Upper lobe of right lung (tissue), 1 donor: ENCODE measurements at regions of chr17 and their contacts with region 1.

Region 1: GRCh38 chr17:7136266-7136877 is 21.8 kb upstream of the ASGR2 start:
- DNase-seq: peak; percentile 89
- ATAC-seq: peak; percentile 62
- H3K4me3 ChIP-seq: no peak overlapping the region
- H3K27ac ChIP-seq: no peak overlapping the region
- H3K4me1 ChIP-seq: peaks cover 3% of the 10 kb centered on the region
- H3K27me3 ChIP-seq: peaks cover 5% of the 10 kb centered on the region
- CTCF ChIP-seq: peak; percentile 96

Region 2: DNA sequence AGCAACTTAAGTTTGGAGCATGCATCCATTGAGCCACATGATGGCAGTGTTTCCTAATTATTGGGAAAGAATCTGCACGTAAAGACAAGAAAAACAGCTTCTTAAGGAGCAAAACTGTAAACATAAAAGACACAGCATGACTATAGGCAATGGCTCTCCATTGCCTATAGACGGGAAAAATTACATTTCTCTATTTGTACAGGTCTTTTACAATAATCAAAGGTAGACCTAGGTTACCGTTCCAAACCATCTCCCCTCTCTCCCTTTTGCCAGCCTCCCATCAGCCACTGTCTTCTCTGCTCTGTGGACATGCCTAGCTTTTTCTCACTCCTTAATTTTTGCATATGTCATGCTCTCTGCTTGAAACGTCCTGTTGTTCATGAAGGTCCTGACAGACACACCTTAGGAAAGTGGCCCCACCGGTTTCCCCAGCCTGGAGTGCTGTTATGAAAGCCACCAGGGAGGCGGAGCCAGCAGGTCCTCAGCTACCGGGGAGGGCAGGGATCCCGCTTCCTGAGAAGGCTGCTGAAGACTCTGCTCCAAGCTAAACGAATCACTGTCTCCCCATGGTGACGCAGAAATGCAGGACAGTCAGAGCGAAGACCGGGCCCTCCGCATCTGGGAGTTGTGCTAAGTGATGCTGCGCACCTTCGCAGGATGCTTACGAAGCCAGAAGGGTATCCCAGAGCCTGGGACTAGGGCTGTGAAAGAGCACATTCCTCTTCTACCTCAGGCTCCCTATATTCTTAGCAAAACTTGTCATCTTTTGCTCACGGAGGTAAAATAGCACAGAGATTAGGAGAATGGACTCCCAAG is 90.3 kb before region 1 on chr17:
- intact Hi-C with region 1: loop called (anchors 5 kb)
- DNase-seq: peak; percentile 94
- ATAC-seq: peak; percentile 79
- H3K4me3 ChIP-seq: peak overlapping the region; percentile 49
- H3K27ac ChIP-seq: peak overlapping the region; percentile 86
- H3K4me1 ChIP-seq: peaks cover 37% of the 10 kb centered on the region
- H3K27me3 ChIP-seq: no peaks in the 10 kb centered on the region
- CTCF ChIP-seq: peak; percentile 81